Right ventricle myocardium inferior (tissue), 1 donor: ENCODE measurements at regions of chr16 and their contacts with region 1.

Region 1: GRCh38 chr16:31142109-31143010 is 6.8 kb upstream of the PRSS8 start:
- DNase-seq: peak; percentile 99
- ATAC-seq: peak; percentile 98

Region 2: DNA sequence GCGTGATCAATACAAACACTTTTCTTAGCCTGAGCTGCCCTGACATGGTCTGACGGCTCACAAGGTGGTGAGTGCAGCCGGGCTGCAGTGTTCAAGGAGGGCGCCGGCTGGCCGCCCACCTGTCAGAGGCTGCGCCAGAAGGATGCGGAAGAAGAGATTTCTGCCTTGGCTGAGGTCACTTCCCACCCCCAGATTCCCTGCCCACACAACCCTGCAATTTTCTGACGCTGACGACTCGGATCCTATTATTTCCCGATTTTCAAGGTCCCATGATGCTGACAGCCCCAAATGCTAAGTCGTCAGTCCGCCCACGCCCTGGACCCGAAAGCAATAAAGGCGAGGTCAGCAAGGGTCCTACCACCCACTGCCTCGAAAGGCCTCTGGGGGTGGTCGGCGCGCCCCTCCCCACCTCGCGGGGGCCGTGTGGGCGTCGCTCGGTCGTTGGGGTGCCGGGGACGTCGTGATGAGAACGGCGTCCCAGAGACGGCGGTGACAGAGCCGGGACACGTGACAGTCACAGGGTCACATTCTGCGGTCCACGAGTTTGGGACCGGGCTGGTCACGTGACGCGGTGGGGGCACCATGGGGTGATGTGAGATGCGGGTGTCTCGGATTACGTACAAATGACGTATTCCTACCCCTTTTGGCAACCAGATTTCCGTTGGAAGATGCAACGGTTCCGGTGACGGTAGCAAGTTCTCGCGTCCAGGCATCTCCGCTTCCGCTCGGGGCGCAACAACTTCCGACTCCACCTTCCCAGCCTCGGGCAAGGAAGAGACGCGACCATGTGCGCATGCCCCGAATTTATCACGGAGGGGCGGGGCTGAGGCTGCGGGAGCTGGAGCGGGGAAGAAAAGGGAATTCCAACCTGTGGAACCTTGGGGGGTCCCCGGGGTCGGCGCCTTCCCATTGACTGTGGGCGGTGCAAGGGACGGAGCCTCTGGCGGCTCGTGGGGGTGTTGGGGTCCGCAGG is 109.3 kb before region 1 on chr16 and contains the start of gene STX4:
- intact Hi-C with region 1: loop called (anchors 1 kb)
- DNase-seq: peak; percentile 99
- ATAC-seq: peak; percentile 95
- total RNA-seq, gene STX4: 42.3 TPM

Region 3: GRCh38 chr16:31117391-31118197 is 24.8 kb before region 1 on chr16 and contains the start of gene KAT8:
- intact Hi-C with region 1: loop called (anchors 2 kb)
- DNase-seq: peak; percentile 99
- ATAC-seq: peak; percentile 96
- total RNA-seq, gene KAT8: 67.4 TPM

Region 4: DNA sequence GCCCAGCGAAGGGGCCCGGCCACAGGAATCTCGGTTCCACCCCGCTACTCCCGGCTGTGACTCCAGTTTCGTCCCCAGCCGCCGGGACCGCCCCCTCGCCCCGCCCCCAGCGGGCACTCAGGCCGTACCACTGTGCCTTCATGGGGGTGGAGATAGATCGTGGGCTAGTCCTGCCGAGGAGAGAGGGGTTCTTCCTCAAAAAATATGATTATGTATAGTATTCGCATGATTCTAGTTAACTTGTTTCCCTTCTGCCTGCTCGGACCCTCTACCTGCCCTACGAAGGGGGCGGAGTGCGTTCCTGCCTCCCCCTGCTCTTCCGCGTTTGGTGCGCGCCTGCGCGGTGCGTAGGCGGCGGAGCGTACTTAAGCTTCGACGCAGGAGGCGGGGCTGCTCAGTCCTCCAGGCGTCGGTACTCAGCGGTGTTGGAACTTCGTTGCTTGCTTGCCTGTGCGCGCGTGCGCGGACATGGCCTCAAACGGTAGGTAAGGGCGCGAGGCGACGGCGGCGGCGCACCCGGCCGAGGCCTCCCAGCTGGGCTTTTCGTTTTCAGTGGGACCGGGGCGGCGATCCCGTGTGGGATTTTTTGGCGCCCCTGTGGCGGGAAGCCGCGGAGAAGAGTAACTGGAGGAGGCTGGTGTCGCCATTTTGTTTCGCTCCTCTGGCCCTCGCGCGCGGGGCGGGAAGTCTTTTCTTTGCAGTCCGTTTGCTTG is 37.5 kb after region 1 on chr16 and contains the start of gene FUS:
- intact Hi-C with region 1: loop called (anchors 2 kb)
- DNase-seq: peak; percentile 96
- ATAC-seq: peak; percentile 89
- total RNA-seq, gene FUS: 86.8 TPM

Region 5: GRCh38 chr16:31421587-31421986 is 279.2 kb after region 1 on chr16:
- intact Hi-C with region 1: no loop called
- DNase-seq: no peak
- ATAC-seq: no peak